ENCODE measurements at regions of chr11 and their contacts with region 1.

Region 1: GRCh38 chr11:126194121-126194543 is 17.3 kb downstream of the RPUSD4 start:
- DNase-seq: peak; percentile 47 to 50
- H3K4me3 ChIP-seq: no peak overlapping the region
- H3K27ac ChIP-seq: no peak overlapping the region
- H3K4me1 ChIP-seq: peaks cover 0 to 4% of the 10 kb centered on the region in 2 donors
- H3K27me3 ChIP-seq: no peaks in the 10 kb centered on the region
- CTCF ChIP-seq: peak in 5 of 6 experiments; percentile 60 to 90 (median 73)
- POLR2A ChIP-seq: no peak

Region 2: GRCh38 chr11:125923012-125923579 is 271.0 kb before region 1 on chr11:
- intact Hi-C with region 1: loop called (anchors 2 kb)
- DNase-seq: peak; percentile 71 to 75
- H3K4me3 ChIP-seq: no peak overlapping the region
- H3K27ac ChIP-seq: no peak overlapping the region
- H3K4me1 ChIP-seq: no peaks in the 10 kb centered on the region
- H3K27me3 ChIP-seq: no peaks in the 10 kb centered on the region
- CTCF ChIP-seq: peak; percentile 51 to 86 (median 79)
- POLR2A ChIP-seq: no peak

Region 3: GRCh38 chr11:125941619-125942611 is 252.2 kb before region 1 on chr11:
- intact Hi-C with region 1: loop called (anchors 5 kb)
- DNase-seq: peak; percentile 80 to 85
- H3K4me3 ChIP-seq: no peak overlapping the region
- H3K27ac ChIP-seq: no peak overlapping the region
- H3K4me1 ChIP-seq: peaks cover 0 to 20% of the 10 kb centered on the region in 2 donors
- H3K27me3 ChIP-seq: no peaks in the 10 kb centered on the region
- CTCF ChIP-seq: peak; percentile 19 to 80 (median 61)
- POLR2A ChIP-seq: no peak

Region 4: DNA sequence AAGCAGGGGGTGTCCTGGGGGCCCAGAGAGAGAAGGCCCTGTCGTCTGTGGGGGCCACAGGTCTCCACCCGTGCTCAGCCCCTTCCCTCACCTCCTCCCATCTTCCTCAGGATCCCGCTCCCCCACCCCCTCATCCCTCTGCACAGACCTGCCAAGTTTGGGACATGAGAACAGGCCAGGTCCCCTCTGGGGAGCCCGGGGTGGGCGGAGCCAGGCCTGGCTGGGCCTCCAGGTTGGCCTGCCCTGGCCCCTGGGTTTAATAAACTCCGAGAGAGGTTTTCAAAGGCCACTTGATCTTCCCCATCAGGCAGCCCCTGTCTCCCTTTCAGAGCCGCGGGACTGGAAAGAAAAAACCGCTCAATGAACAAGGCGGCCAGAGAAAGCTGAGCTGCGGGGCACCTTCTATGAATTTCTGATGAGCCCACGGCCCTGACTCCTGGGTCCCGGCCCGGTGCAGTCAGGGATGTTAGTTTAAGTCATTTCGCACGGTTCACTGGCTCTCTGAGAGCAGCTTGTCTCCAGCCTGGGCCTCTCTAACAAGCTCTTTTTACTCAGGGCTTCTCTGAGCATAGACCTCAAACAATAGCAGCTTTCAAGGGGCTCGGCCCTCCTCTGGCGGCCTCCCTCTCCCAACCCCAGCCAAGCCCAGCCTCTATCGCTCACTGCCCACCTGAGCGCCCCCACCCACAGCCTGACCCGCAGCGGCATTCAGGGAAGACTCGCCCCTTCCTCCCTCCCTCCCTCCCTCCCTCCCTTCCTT is 47.5 kb before region 1 on chr11:
- intact Hi-C with region 1: no loop called
- DNase-seq: peak; percentile 96 to 97
- H3K4me3 ChIP-seq: no peak overlapping the region
- H3K27ac ChIP-seq: peak overlapping the region; percentile 89 to 91 (median 91)
- H3K4me1 ChIP-seq: peaks cover 44 to 58% of the 10 kb centered on the region in 2 donors
- H3K27me3 ChIP-seq: no peaks in the 10 kb centered on the region
- CTCF ChIP-seq: no peak
- POLR2A ChIP-seq: peak in 1 of 2 donors; percentile 36